Panc1 (cell line): ENCODE measurements at regions of chr5 and their contacts with region 1.

Region 1: GRCh38 chr5:171907725-171908343 is 98.6 kb downstream of the FBXW11 start:
- DNase-seq: peak; percentile 28
- ATAC-seq: peak; percentile 90
- H3K4me3 ChIP-seq: no peak overlapping the region
- H3K27ac ChIP-seq: no peak overlapping the region
- H3K4me1 ChIP-seq: peaks cover 27% of the 10 kb centered on the region
- H3K27me3 ChIP-seq: no peaks in the 10 kb centered on the region
- CTCF ChIP-seq: peak; percentile 79; the same call in 1 of the 2 replicates

Region 2: GRCh38 chr5:171418316-171418981 is 489.4 kb before region 1 on chr5:
- CTCF ChIA-PET with region 1: no interaction called
- POLR2A ChIA-PET with region 1: interaction called, 5 read pairs
- in situ Hi-C with region 1: no loop called
- intact Hi-C with region 1: loop called (anchors 5 kb)
- DNase-seq: peak; percentile 56
- ATAC-seq: peak; percentile 81
- H3K4me3 ChIP-seq: peak overlapping the region; percentile 45 to 72
- H3K27ac ChIP-seq: peak overlapping the region; percentile 69
- H3K4me1 ChIP-seq: peaks cover 37% of the 10 kb centered on the region
- H3K27me3 ChIP-seq: no peaks in the 10 kb centered on the region
- CTCF ChIP-seq: peak; percentile 93

Region 3: GRCh38 chr5:171630027-171630669 is 277.7 kb before region 1 on chr5:
- CTCF ChIA-PET with region 1: no interaction called
- POLR2A ChIA-PET with region 1: no interaction called
- in situ Hi-C with region 1: no loop called
- intact Hi-C with region 1: loop called (anchors 5 kb)
- DNase-seq: no peak
- ATAC-seq: peak; percentile 99
- H3K4me3 ChIP-seq: peak overlapping the region; percentile 23 to 32
- H3K27ac ChIP-seq: no peak overlapping the region
- H3K4me1 ChIP-seq: no peaks in the 10 kb centered on the region; the same call in 1 of the 2 replicates
- H3K27me3 ChIP-seq: peaks cover 2% of the 10 kb centered on the region; the same call in 1 of the 2 replicates
- CTCF ChIP-seq: peak; percentile 85

Region 4: GRCh38 chr5:171701100-171701541 is 206.7 kb before region 1 on chr5:
- CTCF ChIA-PET with region 1: no interaction called
- POLR2A ChIA-PET with region 1: no interaction called
- in situ Hi-C with region 1: no loop called
- intact Hi-C with region 1: no loop called
- DNase-seq: no peak
- ATAC-seq: no peak
- H3K4me3 ChIP-seq: no peak overlapping the region
- H3K27ac ChIP-seq: no peak overlapping the region
- H3K4me1 ChIP-seq: no peaks in the 10 kb centered on the region
- H3K27me3 ChIP-seq: peaks cover 10% of the 10 kb centered on the region
- CTCF ChIP-seq: no peak

Region 5: DNA sequence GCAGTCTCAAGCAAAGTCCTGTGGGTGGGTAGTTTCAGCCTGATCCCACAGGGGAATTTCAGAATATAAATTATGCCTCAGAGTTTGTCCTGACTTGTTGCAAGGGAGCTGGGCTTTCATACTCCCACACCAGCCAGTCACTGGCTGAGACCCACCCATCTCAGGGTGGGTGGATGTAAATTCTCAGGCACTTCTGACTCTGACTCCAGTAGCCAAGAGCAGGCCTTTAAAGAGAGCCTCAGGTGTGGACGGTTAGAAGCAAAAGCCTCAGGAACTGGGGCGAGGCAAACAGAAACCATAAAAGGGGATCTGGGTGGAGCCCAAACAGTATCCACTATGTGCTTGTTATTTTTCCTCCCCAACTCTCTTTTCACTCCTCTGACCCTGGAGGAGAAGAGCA is 127.2 kb after region 1 on chr5:
- CTCF ChIA-PET with region 1: interaction called, 4 read pairs
- POLR2A ChIA-PET with region 1: no interaction called
- in situ Hi-C with region 1: no loop called
- intact Hi-C with region 1: loop called (anchors 1 kb)
- DNase-seq: no peak
- ATAC-seq: no peak
- H3K4me3 ChIP-seq: no peak overlapping the region
- H3K27ac ChIP-seq: no peak overlapping the region
- H3K4me1 ChIP-seq: no peaks in the 10 kb centered on the region
- H3K27me3 ChIP-seq: no peaks in the 10 kb centered on the region
- CTCF ChIP-seq: no peak

Region 6: GRCh38 chr5:172052450-172053236 is 144.8 kb after region 1 on chr5:
- CTCF ChIA-PET with region 1: interaction called, 3 read pairs
- POLR2A ChIA-PET with region 1: no interaction called
- in situ Hi-C with region 1: no loop called
- intact Hi-C with region 1: loop called (anchors 1 kb)
- DNase-seq: no peak
- ATAC-seq: peak; percentile 39; the same call in 1 of the 2 replicates
- H3K4me3 ChIP-seq: no peak overlapping the region
- H3K27ac ChIP-seq: no peak overlapping the region
- H3K4me1 ChIP-seq: no peaks in the 10 kb centered on the region
- H3K27me3 ChIP-seq: no peaks in the 10 kb centered on the region
- CTCF ChIP-seq: no peak; the same call in 1 of the 2 replicates

Region 7: DNA sequence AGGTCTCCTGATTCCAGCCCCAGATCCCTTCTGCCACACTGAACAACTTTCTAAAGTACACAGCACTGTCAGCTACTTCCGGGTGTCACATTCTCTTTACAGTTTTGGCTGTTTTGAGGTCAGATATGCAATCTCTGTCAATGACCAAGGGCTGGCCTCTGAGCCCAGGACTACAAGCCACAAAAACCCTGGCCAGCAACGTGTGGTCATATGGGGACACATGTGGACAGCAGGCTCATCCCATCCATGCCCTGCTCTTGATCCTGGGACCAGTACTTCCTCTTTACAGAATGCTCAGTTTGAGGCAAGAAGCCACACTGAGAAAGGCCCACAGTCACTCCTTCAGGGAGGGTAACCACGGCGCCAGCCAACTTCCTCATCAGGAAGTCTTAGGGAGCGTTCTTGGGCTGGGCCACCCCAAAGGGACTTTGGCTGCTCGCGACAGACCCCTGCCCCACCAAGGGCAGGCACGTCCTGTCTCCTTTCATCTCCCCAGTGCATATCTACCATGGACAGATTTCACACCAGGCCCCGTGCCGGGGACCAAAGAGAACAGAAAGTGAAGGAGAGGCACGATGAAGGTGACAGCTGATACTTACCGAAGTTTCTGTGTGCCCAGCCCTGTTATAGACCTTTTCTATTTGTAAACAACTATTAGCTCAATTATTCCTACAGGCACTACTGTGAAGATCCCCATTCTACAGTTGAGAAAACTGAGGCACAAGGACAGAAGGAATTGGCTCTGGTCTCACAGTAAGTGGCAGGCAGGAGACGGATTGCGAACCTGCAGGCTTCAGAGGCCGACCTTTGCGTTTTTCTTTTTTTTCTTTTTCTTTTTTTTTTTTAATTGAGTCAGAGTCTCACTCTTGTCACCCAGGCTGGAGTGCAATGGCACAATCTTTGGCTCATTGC is 242.9 kb after region 1 on chr5:
- CTCF ChIA-PET with region 1: no interaction called
- POLR2A ChIA-PET with region 1: no interaction called
- in situ Hi-C with region 1: no loop called
- intact Hi-C with region 1: no loop called
- DNase-seq: no peak
- ATAC-seq: 0 out of 2 replicates have a peak, but pooled peaks have one; percentile 30
- H3K4me3 ChIP-seq: no peak overlapping the region
- H3K27ac ChIP-seq: no peak overlapping the region
- H3K4me1 ChIP-seq: no peaks in the 10 kb centered on the region
- H3K27me3 ChIP-seq: no peaks in the 10 kb centered on the region
- CTCF ChIP-seq: no peak